Endothelial cell of umbilical vein (primary cell): ENCODE measurements at regions of chr2 and their contacts with region 1.

Region 1: GRCh38 chr2:200901459-200902072 is 12.4 kb downstream of the NIF3L1 start:
- DNase-seq: peak; percentile 91
- H3K4me3 ChIP-seq: no peak overlapping the region
- H3K27ac ChIP-seq: no peak overlapping the region
- H3K4me1 ChIP-seq: no peaks in the 10 kb centered on the region
- H3K27me3 ChIP-seq: no peaks in the 10 kb centered on the region
- CTCF ChIP-seq: peak; percentile 74 to 75
- POLR2A ChIP-seq: no peak

Region 2: GRCh38 chr2:200864176-200864976 is 37.2 kb before region 1 on chr2 and contains the start of gene CLK1:
- CTCF ChIA-PET with region 1: no interaction called
- POLR2A ChIA-PET with region 1: no interaction called
- dilution Hi-C with region 1: no loop called
- intact Hi-C with region 1: loop called (anchors 1 kb)
- DNase-seq: peak; percentile 95
- H3K4me3 ChIP-seq: peak within 1 kb of the TSS; percentile 90 to 99 (median 91)
- H3K27ac ChIP-seq: peak within 1 kb of the TSS; percentile 88
- H3K4me1 ChIP-seq: peaks cover 26% of the 10 kb centered on the region
- H3K27me3 ChIP-seq: no peaks in the 10 kb centered on the region
- CTCF ChIP-seq: no peak
- POLR2A ChIP-seq: peak; percentile 97
- total RNA-seq, gene CLK1: 79.7 and 92.4 TPM in 2 replicates

Region 3: DNA sequence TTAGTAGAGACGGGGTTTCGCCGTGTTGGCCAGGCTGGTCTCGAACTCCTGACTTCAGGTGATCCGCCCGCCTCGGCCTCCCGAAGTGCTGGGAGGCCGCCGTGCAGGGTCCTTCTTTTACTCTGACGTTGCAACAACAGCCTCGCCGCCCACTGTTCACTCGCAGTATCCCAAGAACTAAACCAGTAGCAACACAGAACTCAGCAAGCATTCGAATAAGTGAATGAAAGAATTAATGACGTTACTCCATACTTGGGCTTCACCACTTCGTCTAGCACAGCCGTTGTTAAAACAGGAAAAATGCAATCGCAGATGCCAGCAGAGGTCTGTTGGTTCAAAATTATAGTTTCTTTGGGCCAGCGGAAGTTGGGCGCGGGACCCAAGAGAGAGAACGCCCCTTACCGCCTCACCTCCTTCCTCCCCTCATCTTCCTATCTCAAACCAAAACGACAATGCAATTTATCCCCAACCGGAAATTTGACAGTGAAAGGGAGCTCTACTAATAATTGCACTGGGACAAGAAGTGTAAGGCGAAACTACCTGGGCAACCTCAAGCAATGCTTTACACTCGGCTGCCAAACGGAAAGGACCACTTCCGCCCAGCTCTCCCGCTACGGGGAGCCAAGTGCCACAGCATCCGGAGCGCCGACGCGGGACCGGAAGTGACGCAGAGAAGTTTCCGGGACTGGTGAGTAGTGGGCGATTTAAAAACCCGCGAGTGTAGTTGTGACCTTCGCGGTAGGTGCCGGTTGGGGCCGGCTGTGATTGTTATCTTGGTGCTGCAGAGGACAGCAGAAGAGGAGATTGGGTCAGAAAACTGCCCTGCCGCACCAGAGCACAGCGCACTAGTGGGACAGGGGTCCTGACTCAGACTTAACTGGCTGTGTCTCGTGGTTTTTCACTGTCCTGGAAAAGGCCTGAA is 12.6 kb before region 1 on chr2 and contains the starts of genes NIF3L1 and PPIL3:
- CTCF ChIA-PET with region 1: interaction called, 5 read pairs
- POLR2A ChIA-PET with region 1: no interaction called
- dilution Hi-C with region 1: no loop called
- intact Hi-C with region 1: loop called (anchors 1 kb)
- DNase-seq: peak; percentile 96
- H3K4me3 ChIP-seq: peak within 1 kb of the TSS; percentile 24 to 76 (median 63)
- H3K27ac ChIP-seq: peak within 1 kb of the TSS; percentile 91
- H3K4me1 ChIP-seq: peaks cover 13% of the 10 kb centered on the region
- H3K27me3 ChIP-seq: no peaks in the 10 kb centered on the region
- CTCF ChIP-seq: peak in 1 of 2 donors; percentile 11
- POLR2A ChIP-seq: peak; percentile 82
- total RNA-seq, gene NIF3L1: 14.9 and 16.3 TPM in 2 replicates
- total RNA-seq, gene PPIL3: 25.0 and 28.7 TPM in 2 replicates

Region 4: GRCh38 chr2:201171259-201171814 is 269.8 kb after region 1 on chr2:
- CTCF ChIA-PET with region 1: interaction called, 124 read pairs
- POLR2A ChIA-PET with region 1: no interaction called
- dilution Hi-C with region 1: loop called (anchors 25 kb)
- intact Hi-C with region 1: loop called (anchors 1 kb)
- DNase-seq: peak; percentile 64
- H3K4me3 ChIP-seq: no peak overlapping the region
- H3K27ac ChIP-seq: no peak overlapping the region
- H3K4me1 ChIP-seq: peaks cover 10% of the 10 kb centered on the region
- H3K27me3 ChIP-seq: no peaks in the 10 kb centered on the region
- CTCF ChIP-seq: no peak
- POLR2A ChIP-seq: peak; percentile 66